A673 (cell line): ENCODE measurements at regions of chr5 and their contacts with region 1.

Region 1: DNA sequence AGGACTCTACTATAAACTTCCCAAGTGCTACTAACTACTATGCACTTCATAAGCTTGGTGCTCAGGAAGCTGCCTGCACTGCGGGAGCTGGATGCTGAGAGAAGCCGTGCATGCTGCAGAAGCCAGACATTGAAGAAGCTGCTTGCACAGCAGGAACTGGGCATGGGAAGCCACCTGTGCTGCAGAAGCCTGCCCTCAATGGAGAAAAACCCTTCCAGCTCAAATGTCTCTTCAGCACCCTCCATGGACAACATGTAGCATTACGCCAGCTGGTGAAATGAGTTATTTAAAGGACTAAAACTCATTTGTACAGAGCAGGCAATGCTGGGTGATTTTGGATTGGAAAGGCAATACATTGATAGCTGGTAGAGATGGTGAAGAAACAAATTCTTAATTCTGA is 247.2 kb downstream of the KIF4B start:
- DNase-seq: peak; percentile 53
- H3K4me3 ChIP-seq: no peak overlapping the region
- H3K27ac ChIP-seq: no peak overlapping the region
- H3K4me1 ChIP-seq: no peaks in the 10 kb centered on the region
- H3K27me3 ChIP-seq: no peaks in the 10 kb centered on the region
- CTCF ChIP-seq: peak; percentile 48

Region 2: GRCh38 chr5:155136216-155136850 is 124.5 kb before region 1 on chr5:
- CTCF ChIA-PET with region 1: interaction called, 3 read pairs
- POLR2A ChIA-PET with region 1: no interaction called
- intact Hi-C with region 1: loop called (anchors 5 kb)
- DNase-seq: no peak
- H3K4me3 ChIP-seq: no peak overlapping the region
- H3K27ac ChIP-seq: no peak overlapping the region
- H3K4me1 ChIP-seq: no peaks in the 10 kb centered on the region
- H3K27me3 ChIP-seq: no peaks in the 10 kb centered on the region
- CTCF ChIP-seq: no peak